Caco-2 (cell line): ENCODE measurements at regions of chrX and their contacts with region 1.

Region 1: DNA sequence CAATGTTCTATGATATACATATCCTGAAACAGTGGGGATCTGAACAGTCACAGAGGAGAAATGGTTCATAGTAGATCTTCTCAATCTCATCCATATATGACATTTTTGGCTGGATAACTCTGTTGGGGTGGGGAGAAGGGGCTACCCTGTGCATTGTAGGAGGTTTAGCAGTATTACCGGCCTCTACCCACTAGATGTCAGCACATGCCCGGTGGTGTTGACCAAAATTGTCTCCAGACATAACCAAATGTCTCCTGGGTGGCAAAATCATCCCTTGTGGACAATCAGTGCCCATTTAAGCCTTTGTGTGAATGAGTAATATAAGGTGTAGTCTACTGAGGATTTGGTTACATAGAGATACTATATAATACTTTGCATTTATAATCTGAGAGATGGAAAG is 89.9 kb downstream of the PLS3 start:
- DNase-seq: peak in 1 of 2 experiments; percentile 48
- H3K4me3 ChIP-seq: no peak overlapping the region
- H3K4me3 Mint-ChIP-seq: no peak overlapping the region
- H3K27ac Mint-ChIP-seq: no peak overlapping the region
- H3K4me1 ChIP-seq: no peaks in the 10 kb centered on the region
- H3K4me1 Mint-ChIP-seq: no peaks in the 10 kb centered on the region
- H3K27me3 ChIP-seq: no peaks in the 10 kb centered on the region
- H3K27me3 Mint-ChIP-seq: no peaks in the 10 kb centered on the region
- CTCF ChIP-seq: peak; percentile 41 to 43

Region 2: GRCh38 chrX:115525486-115525885 is 125.4 kb before region 1 on chrX:
- CTCF ChIA-PET with region 1: no interaction called
- POLR2A ChIA-PET with region 1: no interaction called
- intact Hi-C with region 1: no loop called
- DNase-seq: no peak
- H3K4me3 ChIP-seq: no peak overlapping the region
- H3K4me3 Mint-ChIP-seq: no peak overlapping the region
- H3K27ac Mint-ChIP-seq: no peak overlapping the region
- H3K4me1 ChIP-seq: no peaks in the 10 kb centered on the region
- H3K4me1 Mint-ChIP-seq: no peaks in the 10 kb centered on the region
- H3K27me3 ChIP-seq: no peaks in the 10 kb centered on the region
- H3K27me3 Mint-ChIP-seq: no peaks in the 10 kb centered on the region
- CTCF ChIP-seq: no peak

Region 3: GRCh38 chrX:115547448-115547847 is 103.5 kb before region 1 on chrX:
- CTCF ChIA-PET with region 1: no interaction called
- POLR2A ChIA-PET with region 1: no interaction called
- intact Hi-C with region 1: no loop called
- DNase-seq: peak in 1 of 2 experiments; percentile 7
- H3K4me3 ChIP-seq: no peak overlapping the region
- H3K4me3 Mint-ChIP-seq: no peak overlapping the region
- H3K27ac Mint-ChIP-seq: no peak overlapping the region
- H3K4me1 ChIP-seq: no peaks in the 10 kb centered on the region
- H3K4me1 Mint-ChIP-seq: no peaks in the 10 kb centered on the region
- H3K27me3 ChIP-seq: no peaks in the 10 kb centered on the region
- H3K27me3 Mint-ChIP-seq: no peaks in the 10 kb centered on the region
- CTCF ChIP-seq: peak in 1 of 2 experiments; percentile 15

Region 4: DNA sequence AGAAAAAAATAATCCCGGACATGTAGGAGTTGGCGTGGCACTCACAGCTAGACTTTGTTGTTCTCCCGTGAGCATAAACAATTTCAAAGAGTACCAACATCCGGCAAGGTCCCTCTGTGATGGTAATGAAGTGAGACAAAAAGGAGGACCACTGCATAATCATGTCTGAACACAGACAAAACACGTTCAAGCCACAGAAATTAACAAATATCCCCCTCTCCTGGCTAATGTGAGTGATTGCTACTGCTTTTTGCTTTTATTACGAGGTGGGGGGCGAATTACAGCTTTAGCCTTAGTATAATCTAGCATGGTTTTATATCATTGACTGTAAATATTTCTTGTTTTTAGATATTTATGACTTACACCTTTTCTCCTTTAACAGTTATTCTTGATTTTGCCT is 28.5 kb after region 1 on chrX:
- CTCF ChIA-PET with region 1: no interaction called
- POLR2A ChIA-PET with region 1: no interaction called
- intact Hi-C with region 1: loop called (anchors 2 kb)
- DNase-seq: peak in 1 of 2 experiments; percentile 8
- H3K4me3 ChIP-seq: no peak overlapping the region
- H3K4me3 Mint-ChIP-seq: no peak overlapping the region
- H3K27ac Mint-ChIP-seq: no peak overlapping the region
- H3K4me1 ChIP-seq: no peaks in the 10 kb centered on the region
- H3K4me1 Mint-ChIP-seq: no peaks in the 10 kb centered on the region
- H3K27me3 ChIP-seq: no peaks in the 10 kb centered on the region
- H3K27me3 Mint-ChIP-seq: no peaks in the 10 kb centered on the region
- CTCF ChIP-seq: peak; percentile 33 to 36

Region 5: DNA sequence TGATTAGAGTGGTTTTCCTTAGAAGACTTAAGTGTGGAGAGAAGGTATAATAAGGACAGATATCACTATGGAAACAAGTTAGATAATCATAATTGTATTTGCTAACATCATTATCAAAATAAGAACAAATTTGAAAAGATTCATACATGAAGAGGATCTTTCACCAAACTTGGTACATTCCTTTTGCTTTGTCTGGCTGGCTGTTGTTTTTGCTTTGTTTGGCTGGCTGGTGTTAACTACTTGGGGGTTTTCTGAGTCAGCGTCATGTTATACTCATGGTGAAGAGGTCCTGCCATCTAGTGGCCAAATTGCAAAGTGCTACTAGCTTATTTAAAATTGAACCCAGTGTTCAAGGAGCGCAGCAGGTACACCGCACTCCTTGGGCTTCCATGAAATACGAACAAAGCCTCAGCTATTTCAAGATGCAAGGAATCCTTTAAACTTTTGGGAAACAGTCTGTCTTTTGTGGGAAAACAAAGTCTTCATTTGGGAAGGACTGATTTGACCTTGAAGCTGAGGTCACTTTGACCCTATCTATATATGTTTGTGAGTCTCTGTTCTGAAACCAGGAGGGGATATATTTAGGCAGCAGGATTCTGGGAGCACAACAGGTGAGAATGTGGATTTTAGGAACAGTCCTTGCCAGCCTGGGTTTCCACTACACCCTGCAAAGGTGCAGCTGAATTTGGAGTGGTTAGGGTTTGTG is 39.7 kb after region 1 on chrX:
- CTCF ChIA-PET with region 1: interaction called, 3 read pairs
- POLR2A ChIA-PET with region 1: no interaction called
- intact Hi-C with region 1: loop called (anchors 2 kb)
- DNase-seq: peak; percentile 47 to 53
- H3K4me3 ChIP-seq: no peak overlapping the region
- H3K4me3 Mint-ChIP-seq: no peak overlapping the region
- H3K27ac Mint-ChIP-seq: peak overlapping the region; percentile 48
- H3K4me1 ChIP-seq: no peaks in the 10 kb centered on the region
- H3K4me1 Mint-ChIP-seq: no peaks in the 10 kb centered on the region
- H3K27me3 ChIP-seq: no peaks in the 10 kb centered on the region
- H3K27me3 Mint-ChIP-seq: no peaks in the 10 kb centered on the region
- CTCF ChIP-seq: peak; percentile 60 to 69

Region 6: DNA sequence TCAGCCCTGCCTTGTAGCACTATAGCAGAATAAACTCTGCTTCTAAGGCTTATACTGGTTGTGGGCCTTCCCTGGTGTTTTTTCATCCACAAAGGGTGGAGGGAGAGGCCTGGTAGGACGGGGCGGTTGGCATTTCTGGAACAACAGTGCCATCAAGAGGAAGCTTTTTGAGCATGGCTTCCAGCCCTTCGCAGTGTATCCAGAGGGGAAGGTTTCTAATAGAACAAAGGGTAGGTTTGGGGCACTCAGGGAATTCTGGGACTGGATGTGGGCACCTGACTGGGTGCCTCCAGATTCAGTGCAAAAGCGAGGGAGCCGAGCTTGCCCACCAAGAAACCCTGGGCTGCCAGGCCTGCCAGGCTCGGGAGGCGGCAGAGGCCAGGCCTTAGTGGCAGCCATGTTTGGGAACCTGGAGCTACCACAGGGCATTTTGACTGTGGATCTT is 290.0 kb after region 1 on chrX:
- CTCF ChIA-PET with region 1: no interaction called
- POLR2A ChIA-PET with region 1: no interaction called
- intact Hi-C with region 1: loop called (anchors 10 kb)
- DNase-seq: peak in 1 of 2 experiments; percentile 56
- H3K4me3 ChIP-seq: no peak overlapping the region
- H3K4me3 Mint-ChIP-seq: no peak overlapping the region
- H3K27ac Mint-ChIP-seq: peak overlapping the region; percentile 65
- H3K4me1 ChIP-seq: no peaks in the 10 kb centered on the region
- H3K4me1 Mint-ChIP-seq: no peaks in the 10 kb centered on the region
- H3K27me3 ChIP-seq: no peaks in the 10 kb centered on the region
- H3K27me3 Mint-ChIP-seq: no peaks in the 10 kb centered on the region
- CTCF ChIP-seq: peak in 1 of 2 experiments; percentile 1

Region 7: GRCh38 chrX:116284386-116284785 is 633.5 kb after region 1 on chrX:
- CTCF ChIA-PET with region 1: no interaction called
- POLR2A ChIA-PET with region 1: no interaction called
- intact Hi-C with region 1: no loop called
- DNase-seq: no peak
- H3K4me3 ChIP-seq: no peak overlapping the region
- H3K4me3 Mint-ChIP-seq: no peak overlapping the region
- H3K27ac Mint-ChIP-seq: no peak overlapping the region
- H3K4me1 ChIP-seq: peaks cover 14% of the 10 kb centered on the region
- H3K4me1 Mint-ChIP-seq: peaks cover 22% of the 10 kb centered on the region
- H3K27me3 ChIP-seq: no peaks in the 10 kb centered on the region
- H3K27me3 Mint-ChIP-seq: no peaks in the 10 kb centered on the region
- CTCF ChIP-seq: no peak